Transverse colon (tissue), 4 donors: ENCODE measurements at regions of chr18 and their contacts with region 1.

Region 1: GRCh38 chr18:58649966-58650816 is 21.1 kb upstream of the MALT1 start:
- DNase-seq: no peak
- H3K4me3 ChIP-seq: no peak overlapping the region
- H3K27ac ChIP-seq: no peak overlapping the region
- H3K4me1 ChIP-seq: peaks cover 0 to 4% (median 0%) of the 10 kb centered on the region in 4 donors
- H3K27me3 ChIP-seq: no peaks in the 10 kb centered on the region
- CTCF ChIP-seq: no peak
- EP300 ChIP-seq: no peak
- POLR2A ChIP-seq: no peak

Region 2: GRCh38 chr18:58087917-58088692 is 562.1 kb before region 1 on chr18:
- in situ Hi-C with region 1: no loop called
- intact Hi-C with region 1: no loop called
- DNase-seq: peak; percentile 75
- H3K4me3 ChIP-seq: no peak overlapping the region
- H3K27ac ChIP-seq: peak overlapping the region; percentile 68 to 74 (median 72)
- H3K4me1 ChIP-seq: peaks cover 0 to 38% (median 4%) of the 10 kb centered on the region in 4 donors
- H3K27me3 ChIP-seq: no peaks in the 10 kb centered on the region
- CTCF ChIP-seq: no peak
- EP300 ChIP-seq: no peak
- POLR2A ChIP-seq: no peak

Region 3: GRCh38 chr18:58578835-58579560 is 71.2 kb before region 1 on chr18:
- in situ Hi-C with region 1: no loop called
- intact Hi-C with region 1: no loop called
- DNase-seq: no peak
- H3K4me3 ChIP-seq: no peak overlapping the region
- H3K27ac ChIP-seq: no peak overlapping the region
- H3K4me1 ChIP-seq: no peaks in the 10 kb centered on the region
- H3K27me3 ChIP-seq: no peaks in the 10 kb centered on the region
- CTCF ChIP-seq: no peak
- EP300 ChIP-seq: no peak
- POLR2A ChIP-seq: no peak

Region 4: DNA sequence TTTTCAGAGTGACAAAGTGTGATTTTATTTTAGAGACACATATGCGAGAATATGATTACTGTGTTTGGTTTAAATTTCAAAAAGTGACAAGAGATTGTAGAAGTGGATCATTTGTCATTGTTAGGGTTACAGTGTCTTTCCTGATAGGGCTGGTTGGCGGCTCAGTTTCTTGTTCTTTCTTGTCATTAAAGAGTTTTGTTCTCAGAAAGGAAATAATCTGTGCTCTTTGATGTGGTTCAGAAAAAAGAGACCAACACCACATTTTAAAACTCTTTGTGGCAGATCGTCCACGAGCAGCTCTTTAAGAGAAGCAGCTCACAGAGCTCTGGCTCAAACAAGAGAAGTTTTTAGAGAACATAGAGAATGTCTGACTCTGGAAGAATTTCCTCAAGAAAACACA is 168.9 kb after region 1 on chr18:
- in situ Hi-C with region 1: no loop called
- intact Hi-C with region 1: no loop called
- DNase-seq: no peak
- H3K4me3 ChIP-seq: no peak overlapping the region
- H3K27ac ChIP-seq: no peak overlapping the region
- H3K4me1 ChIP-seq: no peaks in the 10 kb centered on the region
- H3K27me3 ChIP-seq: no peaks in the 10 kb centered on the region
- CTCF ChIP-seq: no peak
- EP300 ChIP-seq: no peak
- POLR2A ChIP-seq: no peak

Region 5: DNA sequence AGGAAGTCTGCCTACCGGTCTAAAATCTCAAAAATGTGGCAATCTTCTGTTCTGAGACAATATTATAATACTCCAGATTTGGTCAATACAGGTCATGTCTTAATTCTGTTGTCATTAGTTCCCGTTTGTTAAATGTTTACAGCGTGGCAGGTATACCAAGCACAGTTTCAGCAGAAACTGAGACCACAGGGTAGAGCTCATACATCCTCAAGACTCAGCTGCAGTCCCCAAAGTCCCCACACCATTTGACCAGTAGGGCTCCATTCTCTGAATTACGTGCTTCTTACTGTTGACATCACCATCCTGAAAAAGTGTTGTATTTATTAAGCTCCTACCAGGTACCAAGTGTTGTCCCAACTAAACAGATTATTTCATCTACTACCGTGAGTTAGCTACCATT is 1565.2 kb after region 1 on chr18:
- in situ Hi-C with region 1: no loop called
- intact Hi-C with region 1: loop called (anchors 10 kb)
- DNase-seq: no peak
- H3K4me3 ChIP-seq: no peak overlapping the region
- H3K27ac ChIP-seq: no peak overlapping the region
- H3K4me1 ChIP-seq: no peaks in the 10 kb centered on the region
- H3K27me3 ChIP-seq: no peaks in the 10 kb centered on the region
- CTCF ChIP-seq: no peak
- EP300 ChIP-seq: no peak
- POLR2A ChIP-seq: no peak